Pancreas (tissue), 10 donors: ENCODE measurements at regions of chr1 and their contacts with region 1.

Region 1: DNA sequence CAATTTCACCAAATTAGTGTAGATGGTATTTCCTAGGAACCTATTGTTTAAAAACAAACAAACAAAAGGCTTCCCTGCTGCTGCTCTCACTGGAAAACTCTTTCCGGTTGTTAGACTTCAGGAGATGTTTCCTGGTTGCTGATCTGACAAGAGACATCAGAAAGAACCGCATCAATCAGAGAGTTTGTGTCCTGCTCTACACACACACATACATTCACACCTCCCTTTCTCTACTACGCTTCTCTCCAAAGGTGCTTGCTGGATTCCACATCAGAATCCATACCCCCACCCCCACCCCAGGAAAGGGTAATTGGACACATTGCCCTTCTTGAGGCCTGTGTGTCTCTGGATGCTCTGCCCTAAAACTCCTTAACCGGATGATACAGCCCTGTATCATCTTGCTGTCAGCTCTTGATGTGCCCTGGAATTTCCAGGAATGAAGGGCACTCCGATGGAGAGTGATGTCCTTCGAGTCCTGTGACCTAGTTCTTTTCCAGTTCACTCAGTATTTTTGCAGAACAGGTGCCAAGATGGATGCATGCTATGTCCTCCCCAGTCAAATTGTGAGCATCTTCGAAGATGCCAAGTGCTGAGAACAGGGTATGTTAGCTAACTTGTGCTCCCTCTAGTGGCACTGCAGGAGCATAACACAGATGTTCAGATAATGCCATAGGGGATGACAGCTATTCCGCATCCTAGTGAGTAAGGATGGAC is 113.7 kb upstream of the SLC35F3 start:
- DNase-seq: peak in 3 of 6 donors; percentile 12 to 36 (median 16)
- ATAC-seq: peak; percentile 63 to 97 (median 94)
- H3K4me3 ChIP-seq: no peak overlapping the region
- H3K27ac ChIP-seq: no peak overlapping the region
- H3K4me1 ChIP-seq: no peaks in the 10 kb centered on the region
- H3K27me3 ChIP-seq: no peaks in the 10 kb centered on the region
- CTCF ChIP-seq: peak; percentile 79 to 85 (median 79)

Region 2: GRCh38 chr1:233440951-233441401 is 349.8 kb before region 1 on chr1:
- intact Hi-C with region 1: loop called in 2 of 3 experiments (anchors 5 to 10 kb)
- DNase-seq: peak in 3 of 6 donors; percentile 13 to 39 (median 18)
- ATAC-seq: peak; percentile 64 to 95 (median 88)
- H3K4me3 ChIP-seq: no peak overlapping the region
- H3K27ac ChIP-seq: no peak overlapping the region
- H3K4me1 ChIP-seq: no peaks in the 10 kb centered on the region
- H3K27me3 ChIP-seq: peaks cover 0 to 5% (median 0%) of the 10 kb centered on the region in 4 donors
- CTCF ChIP-seq: peak; percentile 21 to 52 (median 41)